Mammary epithelial cell (primary cell): ENCODE measurements at regions of chr17 and their contacts with region 1.

Region 1: GRCh38 chr17:222172-222571 is 40.7 kb upstream of the DOC2B start:
- DNase-seq: no peak
- H3K4me3 ChIP-seq: no peak overlapping the region
- H3K27ac ChIP-seq: no peak overlapping the region
- H3K4me1 ChIP-seq: no peaks in the 10 kb centered on the region
- H3K27me3 ChIP-seq: no peaks in the 10 kb centered on the region
- CTCF ChIP-seq: no peak

Region 2: GRCh38 chr17:282000-282911 is 60.1 kb after region 1 on chr17:
- CTCF ChIA-PET with region 1: no interaction called
- dilution Hi-C with region 1: loop called (anchors 5 kb)
- in situ Hi-C with region 1: no loop called
- intact Hi-C with region 1: no loop called
- DNase-seq: no peak
- H3K4me3 ChIP-seq: no peak overlapping the region
- H3K27ac ChIP-seq: no peak overlapping the region
- H3K4me1 ChIP-seq: no peaks in the 10 kb centered on the region
- H3K27me3 ChIP-seq: no peaks in the 10 kb centered on the region
- CTCF ChIP-seq: no peak

Region 3: DNA sequence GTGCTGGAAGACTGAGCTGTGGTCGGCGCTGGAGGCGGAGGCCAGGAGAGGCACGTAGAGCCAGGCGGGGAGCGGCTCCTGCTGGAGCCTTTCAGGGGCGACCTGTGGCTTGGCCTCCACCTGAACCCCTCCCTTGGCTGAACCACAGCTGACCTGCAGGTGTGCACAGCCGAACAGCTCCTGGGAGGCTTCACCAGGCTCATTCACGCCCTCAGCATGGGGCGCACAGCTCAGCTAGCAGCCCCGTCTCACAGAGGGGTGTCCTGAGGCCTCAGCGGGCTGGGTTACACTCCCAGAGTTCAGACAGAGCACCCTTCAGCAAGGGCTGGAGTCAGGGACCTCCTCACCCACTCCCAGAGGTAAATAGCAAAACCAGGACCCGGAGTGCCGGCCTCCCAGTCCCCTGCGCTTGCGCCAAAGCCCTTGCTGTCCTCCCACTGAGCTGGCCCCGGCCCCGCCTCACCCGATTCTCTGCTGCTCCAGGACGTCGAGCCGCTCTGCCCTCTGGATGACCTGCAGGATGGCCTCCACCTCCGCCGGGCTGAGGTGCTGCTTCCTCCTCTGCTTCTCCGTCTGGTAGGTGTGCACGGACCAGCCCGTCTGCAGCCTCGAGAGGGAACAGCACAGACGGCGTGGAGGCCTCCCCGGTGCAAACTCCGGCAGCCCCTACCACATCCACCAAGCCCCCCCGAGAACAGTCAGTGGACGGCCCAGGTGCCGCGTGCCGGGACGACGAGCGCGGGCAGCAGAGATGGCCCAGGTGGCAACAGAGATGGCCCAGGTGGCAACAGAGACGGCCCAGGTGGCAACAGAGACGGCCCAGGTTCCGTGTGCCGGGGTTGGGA is 98.9 kb after region 1 on chr17:
- CTCF ChIA-PET with region 1: no interaction called
- dilution Hi-C with region 1: no loop called
- in situ Hi-C with region 1: no loop called
- intact Hi-C with region 1: no loop called
- DNase-seq: no peak
- H3K4me3 ChIP-seq: no peak overlapping the region
- H3K27ac ChIP-seq: no peak overlapping the region
- H3K4me1 ChIP-seq: no peaks in the 10 kb centered on the region
- H3K27me3 ChIP-seq: no peaks in the 10 kb centered on the region
- CTCF ChIP-seq: no peak